Dendritic cell treated with granulocyte-macrophage colony-stimulating factor and Interleukin-4, amounts not matched to agents 40 ng/mL and 50 ng/mL, for 4 days (primary cell): ENCODE measurements at regions of chr5 and their contacts with region 1.

Region 1: DNA sequence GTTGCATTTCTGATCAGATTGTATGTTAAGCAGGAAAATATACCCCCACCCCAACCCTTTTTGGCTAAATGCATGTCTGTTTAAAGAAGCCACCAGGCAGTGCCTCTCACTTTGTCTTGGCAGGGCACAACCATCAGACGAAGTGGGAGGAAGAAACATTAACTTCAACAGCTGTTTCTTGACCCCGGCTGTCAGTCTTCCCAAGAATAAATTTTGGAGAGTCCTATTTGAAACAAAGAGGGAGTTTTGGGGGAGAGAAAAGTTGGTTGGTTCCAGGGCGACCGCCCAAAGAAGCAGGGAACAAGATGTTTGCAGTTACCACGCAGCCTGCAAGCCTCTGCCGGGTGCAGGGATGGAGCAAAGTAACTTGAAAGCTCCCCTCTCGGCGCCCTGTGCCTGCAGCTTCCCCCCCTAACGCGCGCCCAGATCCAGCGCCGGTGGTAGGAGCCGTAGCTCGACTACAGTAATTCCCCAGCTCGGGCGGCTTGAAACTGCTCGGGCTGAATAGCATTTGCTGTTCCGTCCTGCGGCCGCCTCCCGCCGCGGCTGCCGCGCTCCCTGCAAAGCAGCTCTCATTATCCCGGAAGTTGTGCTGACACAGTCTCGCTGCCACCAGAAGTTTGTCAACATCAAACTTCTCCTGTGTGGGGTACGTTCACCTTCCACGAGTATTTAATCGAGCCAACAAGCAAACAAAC is 100.7 kb upstream of the SSBP2 start:
- H3K4me3 Mint-ChIP-seq: peak overlapping the region; percentile 79
- H3K27ac Mint-ChIP-seq: peak overlapping the region; percentile 96
- H3K4me1 Mint-ChIP-seq: peaks cover 55% of the 10 kb centered on the region
- H3K27me3 Mint-ChIP-seq: no peaks in the 10 kb centered on the region

Region 2: GRCh38 chr5:81425569-81425968 is 426.1 kb before region 1 on chr5:
- intact Hi-C with region 1: loop called (anchors 5 kb)
- H3K4me3 Mint-ChIP-seq: no peak overlapping the region
- H3K27ac Mint-ChIP-seq: no peak overlapping the region
- H3K4me1 Mint-ChIP-seq: peaks cover 19% of the 10 kb centered on the region
- H3K27me3 Mint-ChIP-seq: no peaks in the 10 kb centered on the region

Region 3: GRCh38 chr5:81506900-81507588 is 344.6 kb before region 1 on chr5:
- intact Hi-C with region 1: loop called (anchors 5 kb)
- H3K4me3 Mint-ChIP-seq: no peak overlapping the region
- H3K27ac Mint-ChIP-seq: no peak overlapping the region
- H3K4me1 Mint-ChIP-seq: peaks cover 1% of the 10 kb centered on the region
- H3K27me3 Mint-ChIP-seq: no peaks in the 10 kb centered on the region

Region 4: DNA sequence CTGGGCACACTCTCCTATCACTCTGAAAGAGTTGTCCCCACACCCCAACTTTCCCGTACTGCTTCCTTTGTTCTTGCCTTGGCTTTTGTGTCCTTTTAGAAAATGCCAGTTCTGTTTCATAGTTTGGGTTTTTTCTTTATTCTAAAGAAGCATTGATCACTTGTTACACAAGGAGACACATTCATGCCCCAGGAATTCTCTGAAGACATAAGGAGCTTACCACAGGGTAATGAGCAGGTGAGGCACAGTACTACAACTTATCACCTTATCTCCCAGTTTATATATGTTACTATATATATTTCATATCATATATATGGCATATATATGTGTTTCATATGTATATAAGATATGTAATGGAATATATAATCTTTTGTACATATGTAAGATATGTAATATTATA is 94.2 kb before region 1 on chr5:
- intact Hi-C with region 1: no loop called
- H3K4me3 Mint-ChIP-seq: no peak overlapping the region
- H3K27ac Mint-ChIP-seq: peak overlapping the region; percentile 26
- H3K4me1 Mint-ChIP-seq: peaks cover 35% of the 10 kb centered on the region
- H3K27me3 Mint-ChIP-seq: peaks cover 1% of the 10 kb centered on the region

Region 5: GRCh38 chr5:81787474-81788242 is 64.0 kb before region 1 on chr5:
- intact Hi-C with region 1: loop called (anchors 1 kb)
- H3K4me3 Mint-ChIP-seq: no peak overlapping the region
- H3K27ac Mint-ChIP-seq: no peak overlapping the region
- H3K4me1 Mint-ChIP-seq: peaks cover 28% of the 10 kb centered on the region
- H3K27me3 Mint-ChIP-seq: no peaks in the 10 kb centered on the region

Region 6: DNA sequence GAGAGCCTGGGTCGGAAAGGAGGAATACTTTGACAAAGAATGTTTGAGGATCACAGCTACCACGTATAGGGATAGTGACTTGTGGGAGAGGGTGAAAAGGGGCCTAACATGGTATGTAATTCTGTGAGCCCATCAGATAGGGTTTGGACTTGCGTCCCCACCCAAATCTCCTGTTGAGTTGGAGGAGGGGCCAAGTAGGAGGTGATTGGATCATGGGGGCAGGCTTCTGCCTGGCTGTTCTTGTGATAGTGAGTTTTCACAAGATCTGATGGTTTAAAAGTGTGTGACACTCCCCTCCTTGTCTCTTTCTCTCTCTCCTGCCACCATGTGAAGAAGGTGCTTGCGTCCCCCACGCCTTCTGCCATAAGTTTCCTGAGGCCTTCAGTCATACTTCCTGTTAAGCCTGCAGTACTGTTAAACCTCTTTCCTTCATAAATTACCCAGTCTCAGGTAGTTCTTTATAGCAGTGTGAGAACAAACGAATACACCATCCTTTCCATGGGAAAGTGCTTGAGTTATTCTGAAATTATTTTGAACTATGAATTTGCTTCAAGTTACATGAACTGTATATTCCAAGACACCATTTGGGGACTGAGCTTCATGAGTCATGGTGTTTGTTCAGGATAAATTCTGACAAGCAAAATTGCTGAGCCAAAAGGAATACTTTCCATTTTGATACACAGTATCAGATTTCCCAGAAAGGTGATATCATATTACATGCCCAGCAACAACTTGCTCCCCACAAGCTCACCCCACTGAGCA is 31.9 kb before region 1 on chr5:
- intact Hi-C with region 1: no loop called
- H3K4me3 Mint-ChIP-seq: no peak overlapping the region
- H3K27ac Mint-ChIP-seq: no peak overlapping the region
- H3K4me1 Mint-ChIP-seq: peaks cover 42% of the 10 kb centered on the region
- H3K27me3 Mint-ChIP-seq: no peaks in the 10 kb centered on the region

Region 7: DNA sequence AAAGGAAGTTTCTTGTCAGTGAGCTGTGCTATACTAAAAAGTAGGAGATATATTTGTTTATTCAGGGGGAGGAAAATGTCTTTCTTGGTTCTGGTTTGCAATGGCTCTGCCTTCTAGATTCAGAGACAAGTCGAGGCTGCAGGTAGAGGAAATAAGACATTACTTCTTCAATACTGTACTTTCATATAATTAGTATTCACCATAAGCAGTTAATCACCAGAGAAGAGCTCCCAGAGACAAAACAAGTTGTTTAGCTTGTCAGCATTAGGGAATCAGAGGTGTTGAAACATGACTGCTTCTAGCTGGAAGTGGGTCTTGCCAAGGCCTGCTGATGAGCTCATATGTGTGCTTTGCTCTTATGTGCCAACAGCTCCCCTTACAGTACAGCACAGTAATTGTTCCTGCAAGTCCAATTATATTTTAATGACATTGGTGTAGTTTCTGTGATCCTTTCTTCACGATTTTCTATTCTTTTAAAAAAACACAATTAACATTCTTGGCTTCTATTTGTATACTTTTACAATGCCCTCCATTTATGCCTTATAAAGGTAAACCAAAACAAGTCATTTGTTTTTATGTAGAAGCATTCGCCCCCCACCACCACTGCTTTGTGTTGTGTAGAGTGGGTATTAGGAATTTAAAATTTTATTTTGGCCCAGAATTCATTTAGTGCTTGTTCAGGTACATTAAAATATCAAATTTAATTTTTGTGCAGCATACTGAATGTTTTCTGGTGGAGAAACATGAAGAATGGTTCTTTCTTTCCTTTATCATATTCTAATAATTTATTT is 314.3 kb after region 1 on chr5:
- intact Hi-C with region 1: loop called (anchors 10 kb)
- H3K4me3 Mint-ChIP-seq: no peak overlapping the region
- H3K27ac Mint-ChIP-seq: no peak overlapping the region
- H3K4me1 Mint-ChIP-seq: no peaks in the 10 kb centered on the region
- H3K27me3 Mint-ChIP-seq: no peaks in the 10 kb centered on the region

Region 8: DNA sequence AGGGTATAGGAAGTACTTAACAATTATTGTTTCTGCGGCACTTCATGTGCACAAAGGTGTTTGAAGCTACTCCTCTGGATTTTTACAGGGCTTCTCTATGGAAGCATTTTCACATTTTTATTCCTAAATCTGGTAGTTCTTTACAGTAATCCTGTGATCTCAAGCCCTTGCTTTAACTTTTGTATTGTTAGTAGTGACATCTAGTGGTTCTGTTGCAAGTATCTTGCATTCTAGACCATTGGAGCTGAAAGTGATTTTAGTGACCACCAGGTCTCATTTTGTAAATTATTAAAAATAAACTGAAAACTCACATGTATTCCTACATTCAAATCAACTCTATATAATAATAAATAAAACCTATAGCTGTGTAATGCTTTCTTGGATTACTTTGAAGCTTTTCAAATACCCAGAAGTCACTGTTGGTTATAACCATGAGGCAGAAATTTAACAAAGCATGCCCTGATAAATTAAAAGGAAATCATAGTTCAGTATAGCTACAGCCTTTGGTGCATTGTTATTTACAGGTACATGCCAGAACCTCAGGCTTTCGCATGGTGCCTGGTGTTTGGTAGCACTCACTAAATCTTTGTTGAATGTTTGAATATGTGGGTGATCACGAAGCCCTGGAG is 407.7 kb after region 1 on chr5:
- intact Hi-C with region 1: loop called (anchors 10 kb)
- H3K4me3 Mint-ChIP-seq: no peak overlapping the region
- H3K27ac Mint-ChIP-seq: no peak overlapping the region
- H3K4me1 Mint-ChIP-seq: no peaks in the 10 kb centered on the region
- H3K27me3 Mint-ChIP-seq: no peaks in the 10 kb centered on the region